ENCODE measurements at regions of chr3 and their contacts with region 1.

Region 1: GRCh38 chr3:54427941-54428871 is 305.9 kb downstream of the CACNA2D3 start:
- DNase-seq: peak; percentile 61
- H3K4me3 ChIP-seq: no peak overlapping the region
- H3K27ac ChIP-seq: no peak overlapping the region
- H3K4me1 ChIP-seq: no peaks in the 10 kb centered on the region
- H3K27me3 ChIP-seq: no peaks in the 10 kb centered on the region
- CTCF ChIP-seq: peak; percentile 29 to 82 (median 68)
- POLR2A ChIP-seq: no peak

Region 2: DNA sequence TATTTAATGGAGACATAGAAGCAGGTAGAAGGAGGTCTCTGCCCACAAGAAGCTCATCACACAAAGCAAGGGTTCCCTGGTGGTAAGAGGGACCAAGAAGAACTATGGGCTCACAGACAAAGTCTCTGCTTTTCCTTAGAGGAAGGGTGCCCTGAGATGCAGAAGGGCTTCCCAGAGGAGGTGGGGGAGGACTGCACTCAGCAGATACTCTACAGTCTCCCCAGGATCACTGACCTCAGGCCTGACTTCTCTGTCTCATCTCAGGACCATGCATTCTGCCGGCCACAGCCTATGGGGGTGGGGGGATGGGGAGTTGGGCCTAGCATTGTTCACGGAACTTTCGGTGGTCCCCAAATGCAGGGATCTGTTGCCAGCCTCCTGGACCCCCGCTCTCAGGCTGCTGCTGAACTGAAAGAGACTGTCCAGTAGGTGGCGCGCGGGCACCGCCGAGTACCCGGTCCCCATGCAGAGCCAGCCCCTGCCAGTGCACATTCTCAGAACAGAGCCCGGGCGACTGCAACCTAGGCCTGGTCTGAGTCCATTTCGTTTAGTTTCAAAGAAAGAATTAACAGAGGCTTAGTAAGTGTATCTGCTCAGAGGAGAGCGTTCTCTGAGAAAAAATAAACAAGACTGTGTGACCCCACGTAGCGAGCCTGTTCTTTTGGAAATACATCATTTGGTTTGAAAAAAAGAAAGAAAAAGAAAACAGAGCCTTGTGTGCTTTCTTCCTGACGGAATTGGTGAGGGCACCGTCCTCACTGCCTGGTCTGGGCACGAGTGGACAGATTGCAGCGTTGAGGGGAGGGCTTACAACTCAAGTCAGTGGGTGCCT is 425.6 kb after region 1 on chr3:
- intact Hi-C with region 1: loop called (anchors 10 kb)
- DNase-seq: peak; percentile 64
- H3K4me3 ChIP-seq: no peak overlapping the region
- H3K27ac ChIP-seq: no peak overlapping the region
- H3K4me1 ChIP-seq: no peaks in the 10 kb centered on the region
- H3K27me3 ChIP-seq: no peaks in the 10 kb centered on the region
- CTCF ChIP-seq: peak; percentile 78 to 88 (median 83)
- POLR2A ChIP-seq: no peak

Region 3: DNA sequence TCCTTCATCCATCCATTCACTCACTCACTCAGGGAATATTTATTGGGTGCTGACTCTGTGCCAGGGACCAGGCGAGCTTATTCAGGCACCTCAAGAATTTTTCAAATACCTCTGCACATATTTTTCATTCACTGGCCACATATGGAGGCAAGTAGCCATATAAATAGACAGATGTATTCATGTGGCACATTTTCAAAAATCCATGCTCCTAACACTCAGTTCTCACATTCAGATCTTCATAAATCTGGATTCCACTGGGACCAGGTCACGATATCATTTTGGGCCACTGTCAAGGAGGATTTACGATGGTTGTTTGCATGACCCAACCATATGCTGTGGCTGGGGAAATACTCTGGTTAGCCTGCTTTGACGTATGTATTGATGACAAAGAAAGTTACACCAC is 741.4 kb after region 1 on chr3:
- intact Hi-C with region 1: loop called (anchors 10 kb)
- DNase-seq: no peak
- H3K4me3 ChIP-seq: no peak overlapping the region
- H3K27ac ChIP-seq: no peak overlapping the region
- H3K4me1 ChIP-seq: no peaks in the 10 kb centered on the region
- H3K27me3 ChIP-seq: no peaks in the 10 kb centered on the region
- CTCF ChIP-seq: no peak
- POLR2A ChIP-seq: no peak

Measured in prostate gland (tissue), 2 donors.